ENCODE measurements at regions of chr6 and their contacts with region 1.

Region 1: GRCh38 chr6:160766989-160767660 is 65.1 kb downstream of the PLG start:
- H3K4me3 ChIP-seq: peak overlapping the region; percentile 58
- H3K27ac ChIP-seq: no peak overlapping the region; the same call in 1 of the 2 replicates
- H3K4me1 ChIP-seq: peaks cover 5% of the 10 kb centered on the region; the same call in 1 of the 2 replicates
- CTCF ChIP-seq: peak; percentile 66

Region 2: GRCh38 chr6:160586374-160586773 is 180.8 kb before region 1 on chr6:
- CTCF ChIA-PET with region 1: no interaction called
- POLR2A ChIA-PET with region 1: no interaction called
- H3K4me3 ChIP-seq: no peak overlapping the region
- H3K27ac ChIP-seq: no peak overlapping the region
- H3K4me1 ChIP-seq: no peaks in the 10 kb centered on the region
- CTCF ChIP-seq: no peak

Region 3: GRCh38 chr6:160733050-160733646 is 34.0 kb before region 1 on chr6:
- CTCF ChIA-PET with region 1: interaction called, 10 read pairs
- POLR2A ChIA-PET with region 1: no interaction called
- H3K4me3 ChIP-seq: no peak overlapping the region
- H3K27ac ChIP-seq: no peak overlapping the region
- H3K4me1 ChIP-seq: no peaks in the 10 kb centered on the region
- CTCF ChIP-seq: no peak

Region 4: DNA sequence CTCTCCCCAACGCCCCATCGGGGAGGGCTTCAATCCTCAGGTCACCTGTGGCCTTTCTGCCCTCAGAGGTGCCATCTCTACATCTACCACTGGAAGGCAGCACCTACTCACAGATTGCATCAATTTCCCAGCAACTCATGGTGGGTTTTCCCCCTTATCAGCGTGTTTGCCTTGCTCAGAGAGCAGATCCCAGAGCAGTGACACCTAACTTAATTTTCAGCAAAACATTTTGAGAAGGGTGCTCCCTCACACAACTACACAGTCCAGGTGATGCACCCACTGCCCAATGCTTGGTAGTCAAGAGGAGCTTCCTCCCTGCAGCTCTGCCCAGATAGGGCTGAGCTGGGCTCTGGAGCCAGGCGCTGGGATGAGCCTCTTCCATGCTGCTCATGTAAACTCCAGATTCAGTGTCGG is 16.8 kb before region 1 on chr6:
- CTCF ChIA-PET with region 1: interaction called, 27 read pairs
- POLR2A ChIA-PET with region 1: no interaction called
- H3K4me3 ChIP-seq: no peak overlapping the region
- H3K27ac ChIP-seq: no peak overlapping the region
- H3K4me1 ChIP-seq: no peaks in the 10 kb centered on the region
- CTCF ChIP-seq: peak; percentile 69

Region 5: DNA sequence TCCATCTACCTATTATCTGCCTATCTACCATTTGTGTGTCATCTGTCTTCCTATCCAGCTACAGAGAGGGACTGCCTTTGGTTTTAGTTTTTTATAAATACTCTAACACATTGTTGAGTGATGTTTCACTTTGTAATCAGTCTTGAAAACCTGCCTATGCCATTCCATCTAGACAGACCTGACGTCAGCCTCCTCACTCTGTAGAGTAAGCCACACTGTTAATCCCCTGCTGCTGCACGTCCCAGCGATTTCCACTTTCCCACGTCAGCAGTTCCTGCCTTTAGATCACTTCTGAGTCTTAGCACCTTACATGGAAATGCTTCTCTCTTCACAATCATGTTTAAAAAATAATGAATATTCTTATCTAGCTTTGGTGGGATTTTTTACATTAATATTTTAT is 10.3 kb before region 1 on chr6:
- CTCF ChIA-PET with region 1: interaction called, 27 read pairs
- POLR2A ChIA-PET with region 1: no interaction called
- H3K4me3 ChIP-seq: no peak overlapping the region
- H3K27ac ChIP-seq: no peak overlapping the region
- H3K4me1 ChIP-seq: no peaks in the 10 kb centered on the region
- CTCF ChIP-seq: no peak

Region 6: DNA sequence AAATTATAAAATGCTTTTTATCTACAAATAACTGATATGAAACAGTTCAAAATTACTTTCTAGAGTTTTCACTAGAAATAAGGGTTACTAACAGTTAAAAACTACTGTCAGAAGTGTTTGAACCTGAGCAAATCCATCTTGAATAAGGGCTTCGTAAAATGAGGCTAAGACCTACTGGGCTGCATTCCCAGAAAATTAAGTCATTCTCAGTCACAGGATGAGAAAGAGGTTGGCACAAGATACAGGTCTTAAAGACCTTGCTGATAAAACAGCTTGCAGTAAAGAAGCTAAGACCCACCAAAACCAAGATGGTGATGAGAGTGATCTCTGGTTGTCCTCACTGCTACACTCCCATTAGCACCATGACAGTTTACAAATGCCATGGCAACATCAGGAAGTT is 28.6 kb after region 1 on chr6:
- CTCF ChIA-PET with region 1: interaction called, 12 read pairs
- POLR2A ChIA-PET with region 1: no interaction called
- H3K4me3 ChIP-seq: no peak overlapping the region
- H3K27ac ChIP-seq: no peak overlapping the region
- H3K4me1 ChIP-seq: no peaks in the 10 kb centered on the region
- CTCF ChIP-seq: no peak

Region 7: DNA sequence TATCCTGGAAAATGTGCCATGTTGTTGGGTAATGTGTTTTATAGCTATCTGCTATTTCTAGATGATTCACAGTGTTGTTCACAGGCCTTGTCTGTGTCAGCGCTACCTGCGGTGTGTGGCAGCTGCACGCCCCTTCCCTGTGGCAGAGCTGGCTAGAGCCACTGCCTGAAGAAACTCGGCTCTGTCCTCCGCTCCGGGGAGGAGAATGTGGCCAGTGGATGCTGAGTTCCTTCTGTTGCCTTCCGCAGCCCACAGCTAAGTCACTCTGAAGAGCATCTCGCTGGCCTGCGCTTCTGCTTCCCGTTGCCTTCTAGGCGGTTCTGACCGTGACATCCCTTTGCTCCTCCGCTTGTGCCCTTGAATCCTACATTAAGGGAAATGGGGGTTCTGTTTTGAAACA is 70.0 kb after region 1 on chr6:
- CTCF ChIA-PET with region 1: no interaction called
- POLR2A ChIA-PET with region 1: no interaction called
- H3K4me3 ChIP-seq: no peak overlapping the region
- H3K27ac ChIP-seq: no peak overlapping the region
- H3K4me1 ChIP-seq: no peaks in the 10 kb centered on the region
- CTCF ChIP-seq: no peak